ENCODE measurements at regions of chr5 and their contacts with region 1.

Region 1: GRCh38 chr5:151115274-151115905 is 34.6 kb upstream of the TNIP1 start:
- DNase-seq: peak; percentile 78
- ATAC-seq: peak; percentile 88
- H3K4me3 ChIP-seq: no peak overlapping the region
- H3K4me3 Mint-ChIP-seq: no peak overlapping the region
- H3K27ac ChIP-seq: peak overlapping the region in 1 of 2 donors; percentile 51
- H3K27ac Mint-ChIP-seq: peak overlapping the region; percentile 56
- H3K4me1 ChIP-seq: peaks cover 4 to 11% of the 10 kb centered on the region in 2 donors
- H3K4me1 Mint-ChIP-seq: peaks cover 23% of the 10 kb centered on the region
- H3K27me3 ChIP-seq: no peaks in the 10 kb centered on the region
- H3K27me3 Mint-ChIP-seq: no peaks in the 10 kb centered on the region
- CTCF ChIP-seq: peak; percentile 98

Region 2: GRCh38 chr5:151034422-151035379 is 80.7 kb before region 1 on chr5:
- CTCF ChIA-PET with region 1: interaction called, 12 read pairs
- POLR2A ChIA-PET with region 1: no interaction called
- intact Hi-C with region 1: no loop called
- DNase-seq: no peak
- ATAC-seq: no peak
- H3K4me3 ChIP-seq: no peak overlapping the region
- H3K4me3 Mint-ChIP-seq: no peak overlapping the region
- H3K27ac ChIP-seq: no peak overlapping the region
- H3K27ac Mint-ChIP-seq: peak overlapping the region; percentile 37
- H3K4me1 ChIP-seq: no peaks in the 10 kb centered on the region
- H3K4me1 Mint-ChIP-seq: no peaks in the 10 kb centered on the region
- H3K27me3 ChIP-seq: no peaks in the 10 kb centered on the region
- H3K27me3 Mint-ChIP-seq: no peaks in the 10 kb centered on the region
- CTCF ChIP-seq: no peak

Region 3: GRCh38 chr5:151075698-151076331 is 39.6 kb before region 1 on chr5:
- CTCF ChIA-PET with region 1: interaction called, 85 read pairs
- POLR2A ChIA-PET with region 1: interaction called, 4 read pairs
- intact Hi-C with region 1: loop called (anchors 1 kb)
- DNase-seq: no peak
- ATAC-seq: no peak
- H3K4me3 ChIP-seq: no peak overlapping the region
- H3K4me3 Mint-ChIP-seq: peak overlapping the region; percentile 87
- H3K27ac ChIP-seq: peak overlapping the region in 1 of 2 donors; percentile 28
- H3K27ac Mint-ChIP-seq: peak overlapping the region; percentile 84
- H3K4me1 ChIP-seq: peaks cover 46 to 63% of the 10 kb centered on the region in 2 donors
- H3K4me1 Mint-ChIP-seq: peaks cover 75% of the 10 kb centered on the region
- H3K27me3 ChIP-seq: no peaks in the 10 kb centered on the region
- H3K27me3 Mint-ChIP-seq: no peaks in the 10 kb centered on the region
- CTCF ChIP-seq: no peak

Region 4: DNA sequence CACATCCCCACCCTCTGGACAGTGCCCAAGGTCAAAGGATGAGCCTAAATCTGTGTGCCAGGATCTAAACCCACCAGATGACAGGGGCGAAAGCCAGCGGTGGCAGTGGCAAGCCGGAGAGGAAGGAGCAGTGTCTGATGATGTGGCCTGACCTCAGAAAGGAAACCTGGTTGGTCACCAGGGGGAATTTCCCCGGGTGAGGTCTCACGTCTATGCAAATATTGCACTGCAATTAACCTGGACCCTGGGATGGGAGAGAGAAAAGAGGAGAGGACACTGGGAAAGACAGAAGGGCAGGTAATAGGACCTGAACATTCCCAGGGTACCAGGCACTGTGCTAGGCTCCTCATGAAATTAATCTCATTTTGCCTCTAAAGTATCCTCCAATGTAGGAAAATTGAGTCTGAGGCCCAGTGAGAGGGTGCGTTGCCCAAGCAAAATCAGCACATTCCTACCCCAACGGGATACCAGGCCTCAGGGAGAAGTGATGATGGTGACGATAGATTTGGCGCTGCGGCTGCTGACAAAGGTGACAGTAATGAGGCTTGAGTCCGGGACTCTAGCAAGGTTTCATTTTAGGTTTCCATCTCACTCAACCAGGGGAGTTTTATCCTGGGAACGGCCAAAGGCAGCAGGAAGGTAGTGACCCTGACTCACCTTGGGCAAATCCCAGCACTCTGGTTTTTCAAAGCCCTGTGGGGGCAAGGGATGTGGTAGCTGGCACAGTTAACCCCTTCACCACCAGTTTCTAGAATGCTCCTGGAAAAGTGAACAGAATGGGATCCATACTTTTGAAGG is 21.1 kb before region 1 on chr5:
- CTCF ChIA-PET with region 1: interaction called, 51 read pairs
- POLR2A ChIA-PET with region 1: interaction called, 3 read pairs
- intact Hi-C with region 1: loop called (anchors 2 kb)
- DNase-seq: peak; percentile 79
- ATAC-seq: peak; percentile 76
- H3K4me3 ChIP-seq: peak overlapping the region in 2 of 5 experiments; percentile 2 to 22
- H3K4me3 Mint-ChIP-seq: peak overlapping the region; percentile 82
- H3K27ac ChIP-seq: peak overlapping the region; percentile 26 to 76
- H3K27ac Mint-ChIP-seq: peak overlapping the region; percentile 68
- H3K4me1 ChIP-seq: peaks cover 55 to 62% of the 10 kb centered on the region in 2 donors
- H3K4me1 Mint-ChIP-seq: peaks cover 68% of the 10 kb centered on the region
- H3K27me3 ChIP-seq: no peaks in the 10 kb centered on the region
- H3K27me3 Mint-ChIP-seq: no peaks in the 10 kb centered on the region
- CTCF ChIP-seq: no peak

Region 5: GRCh38 chr5:151164686-151165392 is 49.4 kb after region 1 on chr5:
- CTCF ChIA-PET with region 1: interaction called, 1,701 read pairs
- POLR2A ChIA-PET with region 1: no interaction called
- intact Hi-C with region 1: loop called (anchors 1 kb)
- DNase-seq: peak; percentile 89
- ATAC-seq: peak; percentile 97
- H3K4me3 ChIP-seq: no peak overlapping the region
- H3K4me3 Mint-ChIP-seq: no peak overlapping the region
- H3K27ac ChIP-seq: no peak overlapping the region
- H3K27ac Mint-ChIP-seq: peak overlapping the region; percentile 72
- H3K4me1 ChIP-seq: peaks cover 21 to 28% of the 10 kb centered on the region in 2 donors
- H3K4me1 Mint-ChIP-seq: peaks cover 36% of the 10 kb centered on the region
- H3K27me3 ChIP-seq: no peaks in the 10 kb centered on the region
- H3K27me3 Mint-ChIP-seq: no peaks in the 10 kb centered on the region
- CTCF ChIP-seq: peak; percentile 95

Region 6: GRCh38 chr5:151223469-151224264 is 108.3 kb after region 1 on chr5 and contains the start of gene CCDC69:
- CTCF ChIA-PET with region 1: interaction called, 12 read pairs
- POLR2A ChIA-PET with region 1: no interaction called
- intact Hi-C with region 1: no loop called
- DNase-seq: peak; percentile 75
- ATAC-seq: peak; percentile 42
- H3K4me3 ChIP-seq: peak within 1 kb of the TSS; percentile 70 to 86 (median 80)
- H3K4me3 Mint-ChIP-seq: peak within 1 kb of the TSS; percentile 88
- H3K27ac ChIP-seq: peak within 1 kb of the TSS; percentile 94 to 99
- H3K27ac Mint-ChIP-seq: peak within 1 kb of the TSS; percentile 92
- H3K4me1 ChIP-seq: peaks cover 64 to 75% of the 10 kb centered on the region in 2 donors
- H3K4me1 Mint-ChIP-seq: peaks cover 71% of the 10 kb centered on the region
- H3K27me3 ChIP-seq: no peaks in the 10 kb centered on the region
- H3K27me3 Mint-ChIP-seq: no peaks in the 10 kb centered on the region
- CTCF ChIP-seq: no peak
- total RNA-seq, gene CCDC69: 125 and 129 TPM in 2 replicates

Region 7: GRCh38 chr5:151534350-151534749 is 419.0 kb after region 1 on chr5:
- CTCF ChIA-PET with region 1: no interaction called
- POLR2A ChIA-PET with region 1: no interaction called
- intact Hi-C with region 1: no loop called
- DNase-seq: no peak
- ATAC-seq: no peak
- H3K4me3 ChIP-seq: no peak overlapping the region
- H3K4me3 Mint-ChIP-seq: no peak overlapping the region
- H3K27ac ChIP-seq: no peak overlapping the region
- H3K27ac Mint-ChIP-seq: no peak overlapping the region
- H3K4me1 ChIP-seq: no peaks in the 10 kb centered on the region
- H3K4me1 Mint-ChIP-seq: no peaks in the 10 kb centered on the region
- H3K27me3 ChIP-seq: peaks cover 0 to 11% (median 0%) of the 10 kb centered on the region in 4 experiments
- H3K27me3 Mint-ChIP-seq: peaks cover 17% of the 10 kb centered on the region
- CTCF ChIP-seq: no peak

Measured in B cell (primary cell).